Lower leg skin (tissue), 4 donors: ENCODE measurements at regions of chr1 and their contacts with region 1.

Region 1: GRCh38 chr1:205977402-205978014 is 25.7 kb downstream of the RAB7B start:
- DNase-seq: no peak
- H3K4me3 ChIP-seq: no peak overlapping the region
- CTCF ChIP-seq: peak in 2 of 3 donors; percentile 81 to 87
- POLR2A ChIP-seq: no peak

Region 2: DNA sequence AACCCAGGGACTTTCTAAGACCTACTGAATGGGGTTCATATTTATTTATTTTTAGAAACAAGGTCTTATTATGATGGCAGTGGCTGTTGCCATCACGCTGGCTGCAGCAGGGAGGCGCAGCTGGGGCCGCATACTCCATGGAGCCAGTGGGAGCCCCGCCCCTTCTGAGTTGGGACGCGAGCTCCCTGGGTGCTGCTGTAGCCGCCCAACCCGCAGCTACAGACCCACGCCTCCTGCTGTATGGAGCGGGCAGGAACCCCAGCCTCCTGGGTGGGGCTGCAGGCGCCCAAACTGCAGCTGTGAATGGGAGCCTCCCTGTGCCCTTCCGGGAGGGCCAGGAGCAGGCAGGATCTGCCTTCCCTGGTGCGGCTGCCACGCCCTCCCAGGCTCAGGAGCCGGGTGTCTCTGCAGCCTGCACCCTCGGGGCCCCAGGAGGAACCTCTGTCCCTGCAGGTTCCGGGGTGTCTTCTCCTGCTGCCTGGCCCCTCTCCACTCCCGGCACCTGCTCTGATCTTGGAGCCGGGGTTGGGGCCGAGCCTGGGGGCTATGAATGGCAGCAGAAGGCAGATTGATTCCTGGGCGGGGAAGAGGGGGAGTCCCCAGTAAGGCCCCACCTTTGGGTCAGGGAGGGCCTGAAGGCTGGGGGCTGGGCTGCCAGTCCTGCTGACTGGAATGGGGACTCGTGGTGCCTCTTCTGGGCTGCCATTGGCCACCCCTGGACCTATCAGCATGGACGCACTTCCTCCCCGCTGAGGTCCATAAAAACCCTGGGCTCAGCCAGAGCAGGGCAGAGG is 1225.4 kb before region 1 on chr1:
- intact Hi-C with region 1: no loop called
- DNase-seq: peak; percentile 23 to 76
- H3K4me3 ChIP-seq: no peak overlapping the region
- CTCF ChIP-seq: no peak
- POLR2A ChIP-seq: no peak

Region 3: DNA sequence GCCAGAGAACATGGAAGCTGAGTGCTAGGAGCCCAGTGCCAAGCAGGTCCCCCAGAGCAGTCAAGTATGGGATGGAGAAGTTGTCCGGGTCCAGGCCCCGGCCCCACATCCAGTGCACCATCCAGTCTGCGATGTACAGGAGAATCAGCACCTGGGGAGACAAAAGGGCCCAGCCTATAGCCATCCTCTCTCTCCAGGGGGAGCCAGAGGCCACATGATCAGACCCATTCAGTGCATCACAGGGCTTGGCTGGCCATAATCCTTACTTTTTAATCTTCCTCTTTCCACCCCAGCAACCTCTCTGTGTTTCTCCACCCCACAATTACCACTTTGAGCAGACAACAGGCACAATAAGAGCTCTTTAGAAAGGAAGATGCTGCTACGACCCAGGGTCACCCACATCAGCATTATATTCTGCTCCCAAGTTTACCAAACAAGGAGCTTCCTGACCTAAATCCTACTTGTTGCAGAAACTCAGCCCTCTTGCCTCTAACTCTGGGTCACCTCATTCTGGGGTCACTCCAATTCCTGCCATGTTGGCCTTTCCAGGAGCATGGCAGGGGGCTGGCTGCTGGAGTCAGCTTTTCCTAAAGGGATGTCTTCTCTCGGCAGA is 185.8 kb before region 1 on chr1:
- intact Hi-C with region 1: loop called (anchors 5 kb)
- DNase-seq: no peak
- H3K4me3 ChIP-seq: no peak overlapping the region
- CTCF ChIP-seq: no peak
- POLR2A ChIP-seq: no peak

Region 4: GRCh38 chr1:205827623-205828022 is 149.9 kb before region 1 on chr1:
- intact Hi-C with region 1: no loop called
- DNase-seq: no peak
- H3K4me3 ChIP-seq: no peak overlapping the region
- CTCF ChIP-seq: no peak
- POLR2A ChIP-seq: no peak

Region 5: GRCh38 chr1:205919026-205919746 is 58.3 kb before region 1 on chr1:
- intact Hi-C with region 1: loop called (anchors 2 kb)
- DNase-seq: peak; percentile 78 to 95
- H3K4me3 ChIP-seq: no peak overlapping the region
- CTCF ChIP-seq: peak in 1 of 3 donors; percentile 71
- POLR2A ChIP-seq: no peak